Gastrocnemius medialis (tissue), 4 donors: ENCODE measurements at regions of chr12 and their contacts with region 1.

Region 1: DNA sequence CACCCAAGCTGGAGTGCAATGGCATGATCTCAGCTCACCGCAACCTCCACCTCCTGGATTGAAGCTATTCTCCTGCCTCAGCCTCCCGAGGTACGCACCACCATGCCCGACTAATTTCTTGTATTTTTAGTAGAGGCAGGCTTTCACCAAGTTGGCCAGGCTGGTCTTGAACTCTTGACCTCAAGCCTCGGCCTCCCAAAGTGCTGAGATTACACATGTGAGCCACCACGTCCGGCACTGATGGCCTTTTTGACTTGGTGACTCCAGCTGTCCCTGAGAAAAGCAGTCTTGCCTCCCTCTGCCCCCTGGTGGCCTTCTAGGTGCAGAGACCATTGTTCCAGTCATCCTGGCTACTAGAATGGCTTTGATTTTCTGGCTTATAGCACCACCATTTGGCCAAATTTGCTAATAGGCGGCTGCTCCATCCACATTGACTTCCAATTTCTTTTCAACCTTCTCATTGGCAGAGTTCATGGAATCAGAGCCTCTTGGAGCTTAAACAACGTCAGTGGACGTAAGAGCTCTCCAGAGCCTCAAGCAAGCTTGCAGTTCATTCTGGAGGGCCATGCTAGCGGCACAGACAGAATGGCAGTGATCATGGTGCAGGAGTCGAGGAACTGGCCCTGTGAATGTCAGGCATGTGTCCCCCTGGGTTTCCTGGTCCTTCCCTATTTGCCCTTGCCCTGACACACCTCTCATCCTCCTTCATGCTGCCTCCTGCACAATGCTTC is 25.4 kb upstream of the EIF4B start:
- DNase-seq: peak; percentile 70 to 78
- ATAC-seq: peak; percentile 96 to 98
- H3K4me3 ChIP-seq: no peak overlapping the region
- H3K27ac ChIP-seq: no peak overlapping the region
- H3K4me1 ChIP-seq: no peaks in the 10 kb centered on the region
- H3K27me3 ChIP-seq: peaks cover 0 to 5% (median 4%) of the 10 kb centered on the region in 3 donors
- CTCF ChIP-seq: peak; percentile 82 to 89 (median 87)
- POLR2A ChIP-seq: no peak

Region 2: DNA sequence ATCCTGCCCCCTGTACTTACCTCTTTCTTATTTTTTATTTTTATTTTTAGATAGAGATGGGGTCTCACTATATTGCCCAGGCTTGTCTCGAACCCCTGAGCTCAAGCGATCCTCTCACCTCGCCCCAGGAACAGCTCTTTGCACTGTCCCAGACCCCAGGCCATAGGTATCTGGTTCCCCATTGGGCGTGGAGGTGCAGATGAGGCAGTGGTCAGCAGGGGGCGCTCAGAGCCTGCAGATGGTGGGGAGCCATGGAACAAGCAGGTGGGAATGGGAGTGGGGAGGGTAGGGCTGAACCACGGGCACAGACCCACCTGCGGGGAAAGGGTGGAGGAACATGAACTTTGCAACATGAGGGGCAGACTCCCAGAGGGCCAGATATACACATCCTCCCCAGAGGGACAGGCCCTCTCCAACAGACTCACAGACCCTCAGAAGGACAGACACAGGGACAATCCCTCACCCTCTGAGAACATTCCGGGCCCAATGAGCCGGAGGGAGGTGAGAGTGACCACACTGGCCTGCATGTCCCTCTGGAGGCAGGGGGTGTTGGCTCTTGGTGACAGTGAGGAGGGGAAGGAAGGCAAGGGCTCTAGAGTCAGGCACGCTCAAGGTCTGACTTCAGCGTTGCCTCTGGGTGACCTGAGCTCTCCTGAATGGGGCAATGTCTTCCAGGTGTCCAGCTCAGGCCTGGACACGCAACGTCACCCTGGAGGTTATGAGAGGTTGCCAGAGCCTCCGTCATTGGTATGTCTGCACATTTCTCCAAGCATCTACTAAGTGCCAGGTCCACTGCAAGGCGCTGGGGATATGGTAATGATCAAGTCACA is 823.9 kb before region 1 on chr12:
- in situ Hi-C with region 1: no loop called
- intact Hi-C with region 1: loop called (anchors 5 kb)
- DNase-seq: peak; percentile 55 to 67
- ATAC-seq: peak; percentile 69 to 74
- H3K4me3 ChIP-seq: no peak overlapping the region
- H3K27ac ChIP-seq: no peak overlapping the region
- H3K4me1 ChIP-seq: peaks cover 0 to 3% of the 10 kb centered on the region in 2 donors
- H3K27me3 ChIP-seq: no peaks in the 10 kb centered on the region
- CTCF ChIP-seq: peak; percentile 90 to 95 (median 93)
- POLR2A ChIP-seq: no peak

Region 3: DNA sequence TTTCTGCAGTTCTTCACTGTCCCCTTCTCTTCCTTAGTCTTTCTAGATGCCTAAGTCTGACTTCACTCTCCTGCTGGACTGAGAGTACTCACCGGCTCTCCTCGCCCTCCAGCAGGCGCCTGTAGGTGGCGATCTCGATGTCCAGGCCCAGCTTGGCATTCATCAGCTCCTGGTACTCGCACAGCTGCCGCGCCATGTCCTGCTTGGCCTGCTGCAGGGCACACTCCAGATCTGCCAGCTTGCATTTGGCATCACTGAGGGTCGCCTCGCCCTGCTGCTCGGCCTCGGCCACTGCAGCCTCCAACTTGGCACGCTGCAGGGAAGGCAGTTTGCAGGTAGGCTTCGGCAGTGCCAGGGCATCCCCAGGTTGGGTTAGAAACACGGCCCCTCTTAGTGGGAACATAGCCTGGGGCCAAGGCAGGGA is 600.6 kb before region 1 on chr12:
- in situ Hi-C with region 1: loop called in 1 of 4 experiments (anchors 25 kb)
- intact Hi-C with region 1: no loop called
- DNase-seq: no peak
- ATAC-seq: no peak
- H3K4me3 ChIP-seq: no peak overlapping the region
- H3K27ac ChIP-seq: no peak overlapping the region
- H3K4me1 ChIP-seq: no peaks in the 10 kb centered on the region
- H3K27me3 ChIP-seq: no peaks in the 10 kb centered on the region
- CTCF ChIP-seq: no peak
- POLR2A ChIP-seq: no peak

Region 4: GRCh38 chr12:52582971-52583456 is 397.8 kb before region 1 on chr12:
- in situ Hi-C with region 1: loop called in 1 of 4 experiments (anchors 25 kb)
- intact Hi-C with region 1: no loop called
- DNase-seq: peak in 1 of 2 donors; percentile 11
- ATAC-seq: peak in 1 of 2 donors; percentile 62
- H3K4me3 ChIP-seq: no peak overlapping the region
- H3K27ac ChIP-seq: no peak overlapping the region
- H3K4me1 ChIP-seq: no peaks in the 10 kb centered on the region
- H3K27me3 ChIP-seq: no peaks in the 10 kb centered on the region
- CTCF ChIP-seq: peak in 3 of 5 experiments; percentile 31 to 47 (median 39)
- POLR2A ChIP-seq: no peak

Region 5: DNA sequence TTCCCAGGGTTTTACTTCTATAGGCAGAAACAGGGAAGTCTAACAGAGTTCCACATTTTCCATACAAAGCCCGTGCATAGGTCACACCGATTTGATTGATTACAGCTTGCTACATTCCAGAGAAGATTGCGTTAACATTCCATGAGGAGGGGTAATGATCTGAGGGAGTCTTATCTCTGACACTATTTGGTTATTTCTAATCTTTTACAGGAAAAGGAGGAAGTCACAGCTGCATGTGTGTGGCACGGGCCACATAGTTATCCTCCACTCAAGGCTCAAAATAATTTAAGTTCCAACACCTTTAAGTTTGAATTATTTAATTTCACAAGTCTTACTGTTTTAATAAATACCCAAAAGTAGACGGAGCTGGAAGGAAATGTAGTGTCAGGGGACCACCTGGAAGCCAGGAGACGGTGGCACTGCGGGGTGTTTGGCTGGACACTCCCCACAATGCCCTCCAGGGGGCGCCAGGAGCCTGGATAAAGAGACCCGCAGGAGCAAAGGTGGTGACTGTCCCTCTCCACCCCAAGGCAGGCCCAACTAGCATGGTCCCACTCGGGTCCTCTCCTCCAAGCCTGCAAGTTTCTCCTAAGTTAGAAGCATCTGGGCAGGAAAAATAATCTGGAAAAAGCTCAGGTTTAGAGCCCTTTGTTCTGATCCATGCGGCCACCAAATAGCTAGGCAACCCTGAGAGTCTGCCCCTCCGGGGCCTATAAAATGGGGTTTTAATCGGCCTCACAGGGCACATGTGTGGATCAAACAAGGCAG is 96.1 kb before region 1 on chr12:
- in situ Hi-C with region 1: loop called (anchors 5 to 10 kb)
- intact Hi-C with region 1: loop called (anchors 1 kb)
- DNase-seq: peak; percentile 31 to 37
- ATAC-seq: peak in 1 of 2 donors; percentile 63
- H3K4me3 ChIP-seq: no peak overlapping the region
- H3K27ac ChIP-seq: no peak overlapping the region
- H3K4me1 ChIP-seq: peaks cover 0 to 2% of the 10 kb centered on the region in 2 donors
- H3K27me3 ChIP-seq: peaks cover 0 to 4% (median 3%) of the 10 kb centered on the region in 3 donors
- CTCF ChIP-seq: peak; percentile 68 to 87 (median 81)
- POLR2A ChIP-seq: no peak

Region 6: GRCh38 chr12:53014709-53015108 is 33.9 kb after region 1 on chr12:
- in situ Hi-C with region 1: no loop called
- intact Hi-C with region 1: no loop called
- DNase-seq: no peak
- ATAC-seq: no peak
- H3K4me3 ChIP-seq: no peak overlapping the region
- H3K27ac ChIP-seq: no peak overlapping the region
- H3K4me1 ChIP-seq: peaks cover 12 to 22% of the 10 kb centered on the region in 2 donors
- H3K27me3 ChIP-seq: no peaks in the 10 kb centered on the region
- CTCF ChIP-seq: no peak
- POLR2A ChIP-seq: no peak